Mammary epithelial cell (primary cell): ENCODE measurements at regions of chr5 and their contacts with region 1.

Region 1: GRCh38 chr5:149828161-149828884 is 98.2 kb downstream of the PPARGC1B start:
- DNase-seq: peak; percentile 89
- H3K4me3 ChIP-seq: no peak overlapping the region
- H3K27ac ChIP-seq: no peak overlapping the region
- H3K4me1 ChIP-seq: no peaks in the 10 kb centered on the region
- H3K27me3 ChIP-seq: no peaks in the 10 kb centered on the region
- CTCF ChIP-seq: peak; percentile 90 to 95

Region 2: GRCh38 chr5:149656576-149657182 is 171.6 kb before region 1 on chr5:
- CTCF ChIA-PET with region 1: interaction called, 4 read pairs
- dilution Hi-C with region 1: no loop called
- in situ Hi-C with region 1: loop called (anchors 5 to 10 kb)
- intact Hi-C with region 1: loop called (anchors 1 kb)
- DNase-seq: peak; percentile 26
- H3K4me3 ChIP-seq: no peak overlapping the region
- H3K27ac ChIP-seq: no peak overlapping the region
- H3K4me1 ChIP-seq: no peaks in the 10 kb centered on the region
- H3K27me3 ChIP-seq: no peaks in the 10 kb centered on the region
- CTCF ChIP-seq: peak; percentile 93 to 96